Naive thymus-derived CD4-positive, alpha-beta T cell (primary cell): ENCODE measurements at regions of chr2 and their contacts with region 1.

Region 1: DNA sequence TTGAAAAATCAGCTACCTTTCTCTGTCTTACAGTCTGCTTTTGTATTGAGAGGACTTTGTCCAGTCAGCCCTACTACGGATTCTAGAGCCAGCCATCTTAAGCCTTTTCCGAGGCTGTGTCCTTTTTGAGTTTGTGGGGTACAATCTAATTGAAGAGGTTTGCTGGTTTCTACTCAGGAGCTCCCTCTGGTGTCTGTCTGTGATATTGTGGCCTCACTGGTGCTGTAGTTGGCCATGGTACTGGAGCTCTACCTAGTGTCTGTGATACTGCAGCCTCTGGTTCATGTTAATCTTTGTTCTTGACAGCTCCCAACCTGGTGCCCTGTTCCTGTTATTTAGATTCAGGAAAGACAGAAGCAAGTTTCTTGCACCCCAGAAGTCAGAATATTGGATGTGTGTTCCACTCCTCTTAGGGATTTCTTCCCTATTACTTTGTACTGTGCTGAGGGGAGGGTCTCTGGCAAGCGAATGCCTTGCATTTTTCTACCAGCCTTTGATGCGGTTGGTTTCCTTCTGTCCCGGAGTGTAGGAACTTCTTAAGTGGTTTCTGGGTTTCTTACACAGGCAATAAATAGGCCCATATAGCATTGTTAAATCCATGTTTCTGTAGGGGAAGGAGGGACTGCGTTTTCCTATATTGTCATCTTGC is 78.5 kb downstream of the ACSL3 start:
- DNase-seq: peak; percentile 8 to 58 (median 33)
- ATAC-seq: peak; percentile 89
- H3K4me3 ChIP-seq: no peak overlapping the region
- H3K4me3 Mint-ChIP-seq: no peak overlapping the region
- H3K27ac ChIP-seq: no peak overlapping the region
- H3K27ac Mint-ChIP-seq: no peak overlapping the region
- H3K4me1 ChIP-seq: no peaks in the 10 kb centered on the region
- H3K4me1 Mint-ChIP-seq: peaks cover 0 to 6% (median 0%) of the 10 kb centered on the region in 7 donors
- H3K27me3 ChIP-seq: no peaks in the 10 kb centered on the region
- H3K27me3 Mint-ChIP-seq: no peaks in the 10 kb centered on the region

Region 2: GRCh38 chr2:222594679-222595078 is 344.7 kb before region 1 on chr2:
- CTCF ChIA-PET with region 1: no interaction called
- POLR2A ChIA-PET with region 1: no interaction called
- intact Hi-C with region 1: no loop called
- DNase-seq: no peak
- ATAC-seq: no peak
- H3K4me3 ChIP-seq: no peak overlapping the region
- H3K4me3 Mint-ChIP-seq: no peak overlapping the region
- H3K27ac ChIP-seq: no peak overlapping the region
- H3K27ac Mint-ChIP-seq: no peak overlapping the region
- H3K4me1 ChIP-seq: no peaks in the 10 kb centered on the region
- H3K4me1 Mint-ChIP-seq: peaks cover 0 to 12% (median 0%) of the 10 kb centered on the region in 7 donors
- H3K27me3 ChIP-seq: no peaks in the 10 kb centered on the region
- H3K27me3 Mint-ChIP-seq: no peaks in the 10 kb centered on the region

Region 3: DNA sequence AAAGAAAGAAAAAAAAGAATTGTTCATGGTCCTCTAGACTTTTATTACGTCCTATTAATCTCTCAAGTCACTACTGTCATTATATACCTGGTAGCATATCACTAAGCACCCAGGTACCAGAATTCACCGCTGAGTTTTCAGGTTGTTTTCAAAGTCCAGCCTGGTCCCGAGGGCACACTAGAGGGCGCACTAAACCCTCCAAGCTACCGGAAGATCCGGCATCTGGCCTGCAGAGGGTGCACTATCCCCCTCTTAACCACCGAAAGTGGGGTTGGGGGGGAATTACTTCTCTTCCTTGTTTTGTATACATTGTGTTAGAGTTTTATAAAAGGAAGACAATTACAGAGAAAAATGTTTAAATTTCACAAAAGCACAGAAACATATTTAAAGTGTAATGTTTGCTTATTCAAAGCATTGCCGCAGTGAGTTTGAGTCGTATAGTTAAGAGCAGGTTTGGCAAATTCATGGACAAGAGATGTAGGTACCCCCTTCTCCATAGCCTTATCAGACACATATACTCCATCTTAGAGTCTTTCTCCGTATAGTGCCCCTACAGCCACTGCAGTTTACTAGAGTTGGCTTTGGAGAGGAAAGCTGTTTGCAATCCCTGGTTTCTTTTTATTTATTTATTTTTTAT is 248.7 kb before region 1 on chr2:
- CTCF ChIA-PET with region 1: no interaction called
- POLR2A ChIA-PET with region 1: no interaction called
- intact Hi-C with region 1: loop called in 1 of 2 experiments (anchors 1 kb)
- DNase-seq: peak; percentile 48 to 77 (median 68)
- ATAC-seq: peak; percentile 100
- H3K4me3 ChIP-seq: no peak overlapping the region
- H3K4me3 Mint-ChIP-seq: peak overlapping the region in 2 of 10 donors; percentile 30 to 40
- H3K27ac ChIP-seq: no peak overlapping the region
- H3K27ac Mint-ChIP-seq: peak overlapping the region in 1 of 9 donors; percentile 51
- H3K4me1 ChIP-seq: no peaks in the 10 kb centered on the region
- H3K4me1 Mint-ChIP-seq: peaks cover 0 to 16% (median 7%) of the 10 kb centered on the region in 7 donors
- H3K27me3 ChIP-seq: no peaks in the 10 kb centered on the region
- H3K27me3 Mint-ChIP-seq: peaks cover 0 to 22% (median 3%) of the 10 kb centered on the region in 5 donors

Region 4: GRCh38 chr2:222797261-222797660 is 142.1 kb before region 1 on chr2:
- CTCF ChIA-PET with region 1: no interaction called
- POLR2A ChIA-PET with region 1: no interaction called
- intact Hi-C with region 1: loop called in 1 of 2 experiments (anchors 1 kb)
- DNase-seq: peak in 2 of 9 donors; percentile 4 to 14
- ATAC-seq: no peak
- H3K4me3 ChIP-seq: no peak overlapping the region
- H3K4me3 Mint-ChIP-seq: no peak overlapping the region
- H3K27ac ChIP-seq: no peak overlapping the region
- H3K27ac Mint-ChIP-seq: no peak overlapping the region
- H3K4me1 ChIP-seq: no peaks in the 10 kb centered on the region
- H3K4me1 Mint-ChIP-seq: no peaks in the 10 kb centered on the region
- H3K27me3 ChIP-seq: no peaks in the 10 kb centered on the region
- H3K27me3 Mint-ChIP-seq: peaks cover 0 to 2% (median 0%) of the 10 kb centered on the region in 5 donors

Region 5: DNA sequence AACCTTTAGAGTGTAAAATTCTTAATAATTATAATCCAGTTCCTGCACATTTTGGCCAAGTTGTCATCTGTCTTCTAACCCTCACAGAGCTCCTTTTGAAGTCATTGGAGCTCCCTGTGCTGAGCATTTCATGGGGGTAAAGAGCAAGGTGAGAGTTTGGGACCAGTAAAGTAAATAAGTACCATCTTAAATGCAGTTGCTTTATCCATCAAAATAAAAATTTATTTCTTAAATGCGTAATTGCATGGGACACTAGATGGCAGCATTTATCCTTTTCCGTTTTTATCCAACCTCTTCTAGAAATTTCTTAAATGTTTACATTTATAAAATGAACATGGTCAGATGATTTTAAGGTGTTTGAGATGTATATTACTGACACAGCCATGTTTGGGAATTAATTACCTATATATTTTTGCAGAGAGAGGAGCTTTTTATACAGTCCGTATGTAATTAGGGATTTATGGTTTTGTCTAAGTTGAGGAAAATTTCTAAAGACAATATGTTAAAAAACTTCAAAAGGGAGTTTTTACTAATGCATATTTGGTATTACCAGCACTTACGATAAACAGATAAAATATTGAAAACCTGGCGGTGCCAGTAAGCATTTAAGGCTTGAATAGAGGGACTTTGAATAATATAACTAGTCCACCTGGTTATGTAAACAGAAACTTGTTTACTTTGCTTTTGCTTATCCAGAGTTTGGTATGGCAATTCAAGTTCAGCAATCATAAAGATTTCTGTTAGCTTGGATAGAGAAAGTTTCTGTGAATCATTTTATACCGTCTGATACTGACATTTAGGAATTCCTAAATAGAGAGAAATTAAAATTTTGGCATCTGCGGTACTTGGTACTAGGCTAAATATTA is 24.0 kb before region 1 on chr2:
- CTCF ChIA-PET with region 1: no interaction called
- POLR2A ChIA-PET with region 1: no interaction called
- intact Hi-C with region 1: loop called in 1 of 2 experiments (anchors 1 kb)
- DNase-seq: no peak
- ATAC-seq: no peak
- H3K4me3 ChIP-seq: no peak overlapping the region
- H3K4me3 Mint-ChIP-seq: no peak overlapping the region
- H3K27ac ChIP-seq: no peak overlapping the region
- H3K27ac Mint-ChIP-seq: no peak overlapping the region
- H3K4me1 ChIP-seq: no peaks in the 10 kb centered on the region
- H3K4me1 Mint-ChIP-seq: peaks cover 11 to 27% (median 20%) of the 10 kb centered on the region in 7 donors
- H3K27me3 ChIP-seq: no peaks in the 10 kb centered on the region
- H3K27me3 Mint-ChIP-seq: no peaks in the 10 kb centered on the region

Region 6: DNA sequence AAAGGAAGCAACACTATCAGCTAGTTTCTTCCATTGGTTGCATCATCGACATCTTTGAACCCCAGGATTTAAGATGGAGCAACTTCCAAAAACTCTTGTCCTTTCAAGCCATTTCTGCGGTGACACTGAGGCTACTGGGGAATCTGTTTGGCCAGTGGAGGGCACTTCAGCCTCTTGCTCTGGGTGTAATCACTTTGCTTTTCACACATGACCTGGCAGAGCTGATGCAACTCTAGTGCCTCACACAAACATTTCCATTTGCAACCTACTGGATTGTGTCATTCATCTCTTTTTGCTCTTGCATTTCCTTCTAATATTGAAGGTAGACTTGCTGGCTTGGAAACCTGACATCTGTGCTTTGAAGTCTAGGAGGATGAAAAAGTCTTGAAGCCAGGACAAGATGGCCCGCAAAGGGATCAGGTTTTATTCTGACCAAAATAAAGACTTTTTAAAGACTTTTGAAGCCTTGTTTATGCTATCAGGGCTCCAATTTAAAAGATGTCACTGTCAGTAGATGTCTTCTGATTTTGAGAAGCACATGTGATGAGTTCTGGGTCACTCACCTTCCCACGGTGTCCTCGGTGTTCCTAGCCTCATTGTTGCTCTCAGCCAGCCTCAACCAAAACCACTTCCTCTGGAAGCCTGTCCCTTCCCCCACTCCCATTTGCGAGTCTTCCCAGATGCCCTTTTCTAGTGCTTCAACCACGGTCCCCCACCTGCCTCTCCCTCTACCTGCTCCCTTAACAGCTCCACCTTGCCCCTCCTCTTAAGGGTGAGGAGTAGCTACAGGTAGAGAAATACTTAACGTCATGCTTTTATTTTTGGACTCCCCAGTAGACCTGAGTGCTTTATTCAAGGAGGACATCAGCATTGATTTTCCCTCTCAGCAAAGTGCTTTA is 42.9 kb after region 1 on chr2:
- CTCF ChIA-PET with region 1: no interaction called
- POLR2A ChIA-PET with region 1: no interaction called
- intact Hi-C with region 1: no loop called
- DNase-seq: no peak
- ATAC-seq: no peak
- H3K4me3 ChIP-seq: no peak overlapping the region
- H3K4me3 Mint-ChIP-seq: peak overlapping the region in 4 of 10 donors; percentile 2 to 49 (median 22)
- H3K27ac ChIP-seq: no peak overlapping the region
- H3K27ac Mint-ChIP-seq: no peak overlapping the region
- H3K4me1 ChIP-seq: peaks cover 0 to 7% of the 10 kb centered on the region in 2 donors
- H3K4me1 Mint-ChIP-seq: peaks cover 5 to 16% (median 8%) of the 10 kb centered on the region in 7 donors
- H3K27me3 ChIP-seq: no peaks in the 10 kb centered on the region
- H3K27me3 Mint-ChIP-seq: peaks cover 21 to 56% (median 37%) of the 10 kb centered on the region in 5 donors